Tibial artery (tissue), 4 donors: ENCODE measurements at regions of chr18 and their contacts with region 1.

Region 1: GRCh38 chr18:20971886-20972267 is 139.7 kb downstream of the ROCK1 start:
- DNase-seq: no peak
- H3K4me3 ChIP-seq: no peak overlapping the region
- H3K27ac ChIP-seq: no peak overlapping the region
- H3K4me1 ChIP-seq: no peaks in the 10 kb centered on the region
- H3K27me3 ChIP-seq: no peaks in the 10 kb centered on the region
- CTCF ChIP-seq: peak; percentile 33 to 36

Region 2: GRCh38 chr18:21004726-21005125 is 32.8 kb after region 1 on chr18:
- intact Hi-C with region 1: no loop called
- DNase-seq: no peak
- H3K4me3 ChIP-seq: no peak overlapping the region
- H3K27ac ChIP-seq: peak overlapping the region; percentile 68 to 69
- H3K4me1 ChIP-seq: peaks cover 0 to 57% (median 14%) of the 10 kb centered on the region in 4 donors
- H3K27me3 ChIP-seq: no peaks in the 10 kb centered on the region
- CTCF ChIP-seq: no peak

Region 3: DNA sequence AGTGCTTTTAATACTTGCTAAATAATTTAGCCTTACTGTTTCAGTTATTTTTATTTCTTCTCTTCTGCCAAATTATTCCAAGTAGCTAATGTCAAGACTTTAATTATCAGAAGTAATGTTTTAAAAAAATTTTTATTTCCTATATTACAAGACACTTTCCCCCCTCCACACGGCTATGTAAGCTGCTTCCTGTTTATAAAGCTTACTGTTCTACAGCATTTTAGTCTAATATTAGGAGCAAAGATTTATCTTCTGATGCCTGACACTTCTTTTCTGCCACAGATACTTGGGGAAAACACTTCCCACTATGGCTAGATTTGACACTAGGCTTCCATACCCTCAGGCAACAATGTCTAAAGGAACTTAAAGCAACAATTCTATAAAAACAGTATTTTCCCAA is 77.4 kb after region 1 on chr18:
- intact Hi-C with region 1: no loop called
- DNase-seq: no peak
- H3K4me3 ChIP-seq: no peak overlapping the region
- H3K27ac ChIP-seq: peak overlapping the region; percentile 58 to 61
- H3K4me1 ChIP-seq: peaks cover 5 to 84% (median 41%) of the 10 kb centered on the region in 4 donors
- H3K27me3 ChIP-seq: no peaks in the 10 kb centered on the region
- CTCF ChIP-seq: no peak

Region 4: DNA sequence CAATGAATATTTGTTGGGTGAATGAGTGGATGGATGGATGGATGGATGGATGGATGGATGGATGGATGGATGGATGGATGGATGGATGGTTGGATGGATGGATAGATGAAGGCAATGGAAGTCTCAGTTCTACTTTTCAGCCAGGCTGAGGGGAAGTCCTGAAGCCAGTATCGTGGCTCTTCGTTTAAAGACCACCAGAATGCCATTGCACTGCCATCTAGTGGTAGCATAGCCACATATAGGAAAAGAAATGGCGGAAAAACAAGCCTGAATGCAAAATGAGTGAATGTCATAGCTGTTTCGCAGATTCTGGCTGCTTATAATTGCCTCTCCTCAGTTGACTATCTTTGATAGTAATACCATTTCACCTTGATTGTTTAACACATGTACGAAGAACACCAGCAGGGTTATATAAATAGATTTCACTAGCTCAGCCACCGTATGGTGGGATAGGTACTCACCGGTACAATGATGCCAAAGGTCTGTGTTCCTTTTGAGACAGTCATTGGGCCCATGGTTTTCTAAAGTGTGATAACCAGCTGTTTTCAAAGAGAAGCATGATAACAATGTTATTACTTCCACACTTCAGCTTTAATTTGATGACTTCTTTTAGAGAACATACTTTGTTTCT is 207.8 kb after region 1 on chr18:
- intact Hi-C with region 1: loop called (anchors 10 kb)
- DNase-seq: peak in 1 of 2 donors; percentile 33
- H3K4me3 ChIP-seq: no peak overlapping the region
- H3K27ac ChIP-seq: no peak overlapping the region
- H3K4me1 ChIP-seq: no peaks in the 10 kb centered on the region
- H3K27me3 ChIP-seq: no peaks in the 10 kb centered on the region
- CTCF ChIP-seq: peak; percentile 65 to 72